Endothelial cell of umbilical vein (primary cell): ENCODE measurements at regions of chr11 and their contacts with region 1.

Region 1: DNA sequence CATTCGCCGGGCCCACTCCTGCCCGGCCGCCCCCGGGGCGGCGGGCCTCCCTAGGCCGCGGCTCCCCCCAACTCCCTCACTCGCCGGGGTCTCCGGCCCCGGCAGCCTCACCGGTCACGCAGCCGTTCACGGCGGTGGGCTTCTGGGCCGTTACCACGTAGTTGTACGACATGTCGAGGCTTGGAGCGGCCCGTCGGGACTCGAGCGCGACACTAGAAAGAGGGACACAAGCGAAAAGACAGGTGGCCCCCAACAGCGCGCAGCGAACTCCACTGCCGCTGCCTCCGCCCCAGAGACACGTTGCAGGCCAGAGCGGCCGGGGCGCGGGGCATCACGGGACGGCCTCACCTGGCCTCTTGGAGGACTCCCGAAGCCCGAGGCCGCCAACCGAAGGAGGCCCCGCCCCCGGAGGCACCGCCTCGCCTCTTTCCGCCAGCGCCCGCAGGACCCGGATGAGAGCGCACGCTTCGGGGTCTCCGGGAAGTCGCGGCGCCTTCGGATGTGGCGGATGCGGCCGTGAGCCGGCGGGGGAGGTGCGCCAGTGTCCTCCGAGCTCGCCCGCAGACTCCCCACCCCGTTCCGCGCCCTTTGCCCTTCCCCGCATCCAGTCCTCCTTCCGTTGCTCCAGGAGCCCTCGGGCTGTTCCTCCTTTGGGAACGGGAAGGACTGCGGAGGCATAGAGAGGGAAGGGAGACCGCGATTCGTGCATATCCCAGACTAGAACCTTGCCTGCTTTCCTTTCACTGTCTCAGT is at the starts of genes DDB1 and TKFC:
- DNase-seq: peak; percentile 94
- H3K4me3 ChIP-seq: peak within 1 kb of the TSS; percentile 67 to 85 (median 76)
- H3K27ac ChIP-seq: peak within 1 kb of the TSS; percentile 40
- H3K4me1 ChIP-seq: peaks cover 10% of the 10 kb centered on the region
- H3K27me3 ChIP-seq: no peaks in the 10 kb centered on the region
- CTCF ChIP-seq: no peak
- POLR2A ChIP-seq: peak; percentile 98
- total RNA-seq, gene DDB1: 229 TPM in 2 replicates
- total RNA-seq, gene TKFC: 28.6 and 30.8 TPM in 2 replicates

Region 2: DNA sequence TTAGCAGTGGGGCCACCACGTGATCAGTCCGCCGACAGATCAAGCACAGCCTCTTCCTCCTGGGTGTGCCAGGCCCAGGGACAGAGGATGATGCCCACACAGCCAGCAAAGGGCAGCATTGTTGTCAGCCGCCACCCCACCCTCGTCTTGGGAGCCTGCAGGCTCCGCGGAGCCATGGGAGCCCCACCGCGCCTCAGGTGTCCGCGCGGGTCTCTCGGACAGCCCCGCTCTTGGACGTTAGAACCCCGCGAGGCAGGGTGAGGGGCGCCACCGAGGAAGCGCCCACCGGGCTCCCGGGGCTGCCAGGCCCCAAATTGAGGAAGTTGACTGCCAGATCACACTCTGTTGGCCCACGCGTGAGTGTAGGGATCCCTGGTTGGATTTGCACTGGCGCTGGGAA is 717.5 kb before region 1 on chr11:
- CTCF ChIA-PET with region 1: no interaction called
- POLR2A ChIA-PET with region 1: no interaction called
- dilution Hi-C with region 1: no loop called
- intact Hi-C with region 1: no loop called
- DNase-seq: no peak
- H3K4me3 ChIP-seq: no peak overlapping the region
- H3K27ac ChIP-seq: no peak overlapping the region
- H3K4me1 ChIP-seq: no peaks in the 10 kb centered on the region
- H3K27me3 ChIP-seq: peaks cover 2% of the 10 kb centered on the region in 2 experiments
- CTCF ChIP-seq: no peak
- POLR2A ChIP-seq: no peak

Region 3: GRCh38 chr11:61254403-61255025 is 78.5 kb before region 1 on chr11:
- CTCF ChIA-PET with region 1: interaction called, 6 read pairs
- POLR2A ChIA-PET with region 1: no interaction called
- dilution Hi-C with region 1: no loop called
- intact Hi-C with region 1: loop called (anchors 10 kb)
- DNase-seq: peak; percentile 61
- H3K4me3 ChIP-seq: no peak overlapping the region
- H3K27ac ChIP-seq: no peak overlapping the region
- H3K4me1 ChIP-seq: no peaks in the 10 kb centered on the region
- H3K27me3 ChIP-seq: peaks cover 0 to 1% of the 10 kb centered on the region in 2 experiments
- CTCF ChIP-seq: peak; percentile 75 to 96
- POLR2A ChIP-seq: no peak

Region 4: GRCh38 chr11:61347916-61348461 is 15.0 kb after region 1 on chr11:
- CTCF ChIA-PET with region 1: interaction called, 31 read pairs
- POLR2A ChIA-PET with region 1: no interaction called
- dilution Hi-C with region 1: no loop called
- intact Hi-C with region 1: loop called (anchors 1 kb)
- DNase-seq: peak; percentile 92
- H3K4me3 ChIP-seq: no peak overlapping the region
- H3K27ac ChIP-seq: peak overlapping the region; percentile 58
- H3K4me1 ChIP-seq: peaks cover 14% of the 10 kb centered on the region
- H3K27me3 ChIP-seq: no peaks in the 10 kb centered on the region
- CTCF ChIP-seq: peak in 1 of 2 donors; percentile 35
- POLR2A ChIP-seq: peak; percentile 69

Region 5: DNA sequence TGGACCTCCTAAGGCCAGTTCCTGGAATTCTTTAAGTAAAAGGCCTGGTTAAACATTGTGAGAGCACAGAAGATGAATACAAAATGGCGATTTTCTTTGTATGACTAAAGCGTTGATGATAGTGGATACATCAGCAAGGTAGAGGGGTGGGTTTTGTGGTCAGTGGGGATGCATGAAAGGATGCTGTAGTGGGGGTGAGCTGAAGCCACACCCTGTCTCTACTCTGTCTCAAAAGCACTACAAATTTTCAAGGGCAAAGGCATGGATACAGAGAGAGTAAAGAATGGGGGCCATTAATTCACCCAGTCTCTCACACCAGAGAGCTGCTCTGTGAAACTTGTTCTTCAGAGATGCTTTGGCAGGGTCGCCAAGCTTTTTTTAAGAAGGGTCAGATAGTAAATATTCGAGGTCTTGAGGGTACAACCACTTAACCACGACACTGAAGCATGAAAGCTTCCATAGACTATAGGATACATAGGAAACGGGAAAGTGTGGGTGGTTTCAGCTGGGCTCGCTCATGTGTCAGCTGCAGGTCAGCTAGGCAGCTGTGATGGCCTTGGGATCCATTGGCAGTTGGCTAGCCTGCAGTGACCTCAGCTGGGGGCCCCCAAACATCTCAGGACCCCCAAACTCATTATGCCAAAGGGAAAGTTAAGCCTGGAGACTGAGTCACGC is 37.5 kb after region 1 on chr11:
- CTCF ChIA-PET with region 1: interaction called, 20 read pairs
- POLR2A ChIA-PET with region 1: no interaction called
- dilution Hi-C with region 1: no loop called
- intact Hi-C with region 1: no loop called
- DNase-seq: no peak
- H3K4me3 ChIP-seq: no peak overlapping the region
- H3K27ac ChIP-seq: no peak overlapping the region
- H3K4me1 ChIP-seq: peaks cover 4% of the 10 kb centered on the region
- H3K27me3 ChIP-seq: no peaks in the 10 kb centered on the region
- CTCF ChIP-seq: no peak
- POLR2A ChIP-seq: no peak

Region 6: DNA sequence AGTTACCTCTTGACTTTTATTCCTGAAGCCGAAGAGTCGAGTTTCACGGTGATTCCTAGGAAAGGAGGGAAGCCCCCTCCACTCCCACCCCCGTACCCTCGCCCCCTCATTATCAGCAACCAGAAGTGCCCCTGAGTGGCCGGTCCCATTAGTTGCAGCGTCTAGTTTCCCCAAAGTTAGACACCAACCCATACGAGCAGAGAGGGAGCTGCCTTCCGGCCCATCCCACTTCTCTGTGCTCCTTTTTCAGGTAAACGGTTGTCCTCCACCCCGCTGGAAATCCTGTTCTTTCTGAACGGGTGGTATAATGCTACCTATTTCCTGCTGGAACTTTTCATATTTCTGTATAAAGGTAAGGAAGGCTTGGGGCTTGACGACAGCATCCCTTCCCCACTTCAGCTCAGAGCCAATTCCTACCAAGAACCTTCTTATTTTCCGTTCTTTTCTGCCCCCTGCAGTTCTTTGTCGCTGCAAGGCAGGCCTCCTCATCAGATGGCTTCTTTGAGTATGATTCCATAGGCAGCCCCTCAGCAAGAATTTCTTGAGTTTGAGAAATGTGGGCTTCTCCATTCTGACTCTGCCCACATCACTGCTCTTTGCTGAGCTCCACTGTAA is 60.1 kb after region 1 on chr11:
- CTCF ChIA-PET with region 1: interaction called, 24 read pairs
- POLR2A ChIA-PET with region 1: interaction called, 5 read pairs
- dilution Hi-C with region 1: no loop called
- intact Hi-C with region 1: loop called (anchors 2 kb)
- DNase-seq: peak; percentile 36
- H3K4me3 ChIP-seq: peak overlapping the region; percentile 71 to 77 (median 71)
- H3K27ac ChIP-seq: no peak overlapping the region
- H3K4me1 ChIP-seq: peaks cover 11% of the 10 kb centered on the region
- H3K27me3 ChIP-seq: no peaks in the 10 kb centered on the region
- CTCF ChIP-seq: peak; percentile 8 to 16
- POLR2A ChIP-seq: no peak